HCT116 (cell line): ENCODE measurements at regions of chr1 and their contacts with region 1.

Region 1: GRCh38 chr1:210248341-210248740 is 15.7 kb downstream of the SERTAD4 start:
- DNase-seq: no peak
- ATAC-seq: no peak
- H3K4me3 ChIP-seq: no peak overlapping the region
- H3K27ac ChIP-seq: no peak overlapping the region
- H3K4me1 ChIP-seq: peaks cover 9 to 18% of the 10 kb centered on the region in 2 experiments; a peak in 3 of 4 replicates
- H3K27me3 ChIP-seq: peaks cover 39% of the 10 kb centered on the region
- CTCF ChIP-seq: no peak
- POLR2A ChIP-seq: no peak
- RAD21 ChIP-seq: no peak

Region 2: GRCh38 chr1:210233216-210234020 is 14.9 kb before region 1 on chr1:
- CTCF ChIA-PET with region 1: no interaction called
- POLR2A ChIA-PET with region 1: no interaction called
- RAD21 ChIA-PET with region 1: interaction called in 1 of 2 experiments, 4 read pairs
- intact Hi-C with region 1: loop called (anchors 2 kb)
- DNase-seq: peak; percentile 4
- ATAC-seq: peak; percentile 72
- H3K4me3 ChIP-seq: peak overlapping the region; percentile 37 to 57
- H3K27ac ChIP-seq: no peak overlapping the region; the same call in 1 of the 2 replicates
- H3K4me1 ChIP-seq: peaks cover 7 to 21% of the 10 kb centered on the region in 2 experiments; a peak in 2 of 4 replicates
- H3K27me3 ChIP-seq: peaks cover 52% of the 10 kb centered on the region
- CTCF ChIP-seq: no peak
- POLR2A ChIP-seq: no peak
- RAD21 ChIP-seq: no peak

Region 3: GRCh38 chr1:210489491-210489890 is 241.2 kb after region 1 on chr1:
- CTCF ChIA-PET with region 1: no interaction called
- POLR2A ChIA-PET with region 1: no interaction called
- RAD21 ChIA-PET with region 1: no interaction called
- intact Hi-C with region 1: no loop called
- DNase-seq: no peak
- ATAC-seq: no peak
- H3K4me3 ChIP-seq: no peak overlapping the region
- H3K27ac ChIP-seq: no peak overlapping the region
- H3K4me1 ChIP-seq: no peaks in the 10 kb centered on the region
- H3K27me3 ChIP-seq: peaks cover 7% of the 10 kb centered on the region; the same call in 1 of the 2 replicates
- CTCF ChIP-seq: no peak
- POLR2A ChIP-seq: no peak
- RAD21 ChIP-seq: no peak

Region 4: DNA sequence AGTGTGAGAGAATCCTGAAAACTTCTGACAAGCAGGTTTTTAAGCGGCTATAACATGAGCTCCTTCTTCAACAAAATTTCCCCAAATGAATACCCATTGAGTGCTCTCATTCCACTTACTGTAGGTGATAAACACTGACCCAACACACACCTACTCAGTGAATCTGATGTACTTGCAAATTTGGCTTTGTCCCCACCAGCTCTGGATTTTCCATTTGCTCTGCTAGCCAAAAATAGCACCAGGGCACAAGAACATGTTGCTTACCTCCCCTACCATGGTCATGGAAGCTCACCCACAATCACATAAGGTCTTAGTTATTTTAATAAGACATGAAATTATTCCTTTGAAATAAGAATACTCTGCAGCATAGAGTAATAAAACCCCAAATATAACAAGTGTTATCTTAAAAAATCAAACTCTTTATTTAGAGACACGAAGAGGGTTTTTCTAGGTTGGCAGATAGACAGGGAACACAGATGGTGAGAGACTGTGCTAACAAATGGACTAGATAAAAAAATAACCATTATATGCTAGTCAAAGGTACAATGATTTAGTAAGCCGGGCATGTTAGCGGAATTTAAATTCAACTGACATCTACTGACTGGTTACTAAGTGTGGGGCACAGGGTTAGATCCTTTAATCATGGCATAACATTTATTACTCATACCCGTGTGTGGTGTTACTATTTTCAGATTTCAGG is 593.7 kb after region 1 on chr1:
- CTCF ChIA-PET with region 1: no interaction called
- POLR2A ChIA-PET with region 1: no interaction called
- RAD21 ChIA-PET with region 1: no interaction called
- intact Hi-C with region 1: no loop called
- DNase-seq: no peak
- ATAC-seq: no peak
- H3K4me3 ChIP-seq: no peak overlapping the region
- H3K27ac ChIP-seq: no peak overlapping the region
- H3K4me1 ChIP-seq: no peaks in the 10 kb centered on the region
- H3K27me3 ChIP-seq: peaks cover 28% of the 10 kb centered on the region
- CTCF ChIP-seq: no peak
- POLR2A ChIP-seq: no peak
- RAD21 ChIP-seq: no peak